HepG2 (cell line): ENCODE measurements at regions of chr22 and their contacts with region 1.

Region 1: GRCh38 chr22:21712894-21713712 is 22.5 kb downstream of the YPEL1 start:
- DNase-seq: peak; percentile 77
- ATAC-seq: peak; percentile 92
- H3K4me3 ChIP-seq: peak overlapping the region in 1 of 3 experiments; percentile 26; a peak in 1 of 6 replicates
- H3K27ac ChIP-seq: no peak overlapping the region
- H3K4me1 ChIP-seq: peaks cover 40% of the 10 kb centered on the region
- H3K27me3 ChIP-seq: peaks cover 2 to 20% of the 10 kb centered on the region in 2 experiments; a peak in 3 of 5 replicates
- CTCF ChIP-seq: peak; percentile 85
- EP300 ChIP-seq: no peak
- POLR2A ChIP-seq: no peak
- RAD21 ChIP-seq: peak; percentile 69

Region 2: DNA sequence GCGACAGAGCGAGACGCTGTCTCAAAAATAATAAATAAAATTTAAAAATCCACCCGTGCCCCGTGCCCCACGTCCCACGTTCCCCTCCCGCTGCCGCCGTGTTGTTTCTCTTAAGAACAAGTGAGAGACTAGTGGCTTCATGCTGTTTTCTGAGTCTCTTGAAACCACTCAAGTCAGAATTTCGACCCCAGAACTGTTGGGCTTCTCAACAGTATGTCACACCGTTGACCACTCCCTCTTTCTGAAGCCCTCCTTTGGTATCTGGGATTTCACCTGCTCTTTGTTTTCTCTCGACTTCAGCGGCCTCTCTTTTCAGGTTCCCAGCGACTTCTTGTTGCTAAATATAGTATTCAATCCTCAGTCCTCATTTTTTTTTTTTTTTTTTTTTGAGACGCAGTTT is 46.3 kb before region 1 on chr22:
- CTCF ChIA-PET with region 1: no interaction called
- POLR2A ChIA-PET with region 1: interaction called, 4 read pairs
- in situ Hi-C with region 1: loop called (anchors 10 kb)
- intact Hi-C with region 1: no loop called
- DNase-seq: no peak
- ATAC-seq: no peak
- H3K4me3 ChIP-seq: peak overlapping the region; percentile 70 to 92 (median 87); a peak in 5 of 6 replicates
- H3K27ac ChIP-seq: peak overlapping the region; percentile 99
- H3K4me1 ChIP-seq: peaks cover 16% of the 10 kb centered on the region
- H3K27me3 ChIP-seq: no peaks in the 10 kb centered on the region
- CTCF ChIP-seq: no peak
- EP300 ChIP-seq: no peak
- POLR2A ChIP-seq: no peak
- RAD21 ChIP-seq: no peak

Region 3: DNA sequence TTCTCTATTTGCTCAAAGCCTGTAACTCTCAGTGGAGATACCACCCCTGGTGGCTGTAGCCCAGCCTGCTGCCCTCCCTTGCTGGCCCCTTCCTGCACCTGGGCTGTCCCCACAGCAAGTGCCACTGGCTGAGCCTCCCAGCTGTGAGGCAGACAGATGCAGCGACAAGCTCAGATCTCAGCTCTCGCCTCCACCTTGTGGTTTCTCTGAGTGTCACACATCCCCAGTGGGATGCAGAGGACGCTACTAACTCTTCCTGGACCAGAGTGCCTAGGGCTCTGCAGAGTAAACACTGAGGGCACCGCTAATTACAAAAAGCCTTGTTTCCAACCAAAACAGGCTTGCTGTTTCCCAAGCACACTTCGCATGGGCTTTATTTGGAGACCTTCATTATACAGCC is 13.5 kb after region 1 on chr22:
- CTCF ChIA-PET with region 1: interaction called, 15 read pairs
- POLR2A ChIA-PET with region 1: no interaction called
- in situ Hi-C with region 1: no loop called
- intact Hi-C with region 1: no loop called
- DNase-seq: peak; percentile 57
- ATAC-seq: peak; percentile 97
- H3K4me3 ChIP-seq: no peak overlapping the region
- H3K27ac ChIP-seq: no peak overlapping the region
- H3K4me1 ChIP-seq: peaks cover 4% of the 10 kb centered on the region; the same call in 1 of the 2 replicates
- H3K27me3 ChIP-seq: peaks cover 0 to 6% of the 10 kb centered on the region in 2 experiments; a peak in 2 of 5 replicates
- CTCF ChIP-seq: peak; percentile 82
- EP300 ChIP-seq: no peak
- POLR2A ChIP-seq: no peak
- RAD21 ChIP-seq: peak; percentile 72

Region 4: DNA sequence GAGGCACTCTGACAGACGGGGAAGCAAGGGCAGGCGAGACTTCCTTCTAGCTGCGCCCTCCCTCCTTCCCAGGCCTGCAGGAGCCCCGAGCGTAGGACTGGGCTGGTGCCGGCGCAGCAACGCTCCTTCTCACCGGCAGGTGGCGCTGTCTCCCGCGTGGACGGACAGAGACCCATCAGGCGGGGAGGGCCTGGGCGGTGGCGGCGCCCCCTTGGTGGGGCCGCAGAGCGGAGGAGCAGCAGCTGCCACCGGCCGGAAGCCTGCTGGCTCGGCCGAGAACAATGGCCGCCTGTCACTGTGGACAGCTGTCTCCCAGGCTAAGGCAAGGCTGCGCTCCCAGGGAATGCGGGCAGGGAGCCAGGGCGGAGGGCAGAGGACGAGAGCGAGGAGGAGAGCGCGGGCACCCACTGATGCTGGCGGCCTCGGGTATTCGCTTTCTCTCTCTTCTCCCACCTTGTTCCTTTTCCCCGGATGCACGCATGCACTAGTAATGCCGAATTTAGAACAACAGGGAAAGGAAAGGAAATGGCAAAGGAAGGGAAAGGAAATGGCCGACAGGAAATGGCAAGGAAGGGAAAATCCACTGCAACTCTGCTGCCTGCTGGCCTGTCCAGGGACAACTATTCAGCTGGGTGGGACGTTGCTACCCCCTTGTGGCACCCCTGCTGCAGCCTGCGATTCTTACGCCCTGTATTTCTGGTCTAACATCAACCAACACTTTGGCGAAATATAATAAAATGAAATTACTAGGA is 225.1 kb after region 1 on chr22:
- CTCF ChIA-PET with region 1: interaction called, 15 read pairs
- POLR2A ChIA-PET with region 1: interaction called, 3 read pairs
- in situ Hi-C with region 1: no loop called
- intact Hi-C with region 1: loop called (anchors 1 kb)
- DNase-seq: peak; percentile 83
- ATAC-seq: peak; percentile 96
- H3K4me3 ChIP-seq: peak overlapping the region; percentile 56 to 78 (median 72)
- H3K27ac ChIP-seq: peak overlapping the region; percentile 83
- H3K4me1 ChIP-seq: peaks cover 18% of the 10 kb centered on the region
- H3K27me3 ChIP-seq: no peaks in the 10 kb centered on the region
- CTCF ChIP-seq: peak; percentile 99
- EP300 ChIP-seq: no peak
- POLR2A ChIP-seq: peak; percentile 57 to 73; a peak in 3 of 4 replicates
- RAD21 ChIP-seq: peak; percentile 85

Region 5: GRCh38 chr22:21947040-21948014 is 234.2 kb after region 1 on chr22:
- CTCF ChIA-PET with region 1: interaction called, 5 read pairs
- POLR2A ChIA-PET with region 1: no interaction called
- in situ Hi-C with region 1: loop called (anchors 5 kb)
- intact Hi-C with region 1: loop called (anchors 2 kb)
- DNase-seq: peak; percentile 27
- ATAC-seq: peak; percentile 39; the same call in 2 of the 3 replicates
- H3K4me3 ChIP-seq: no peak overlapping the region
- H3K27ac ChIP-seq: no peak overlapping the region
- H3K4me1 ChIP-seq: peaks cover 11% of the 10 kb centered on the region
- H3K27me3 ChIP-seq: no peaks in the 10 kb centered on the region; a peak in 1 of 5 replicates
- CTCF ChIP-seq: peak; percentile 22; the same call in 1 of the 2 replicates
- EP300 ChIP-seq: no peak
- POLR2A ChIP-seq: no peak
- RAD21 ChIP-seq: no peak

Region 6: DNA sequence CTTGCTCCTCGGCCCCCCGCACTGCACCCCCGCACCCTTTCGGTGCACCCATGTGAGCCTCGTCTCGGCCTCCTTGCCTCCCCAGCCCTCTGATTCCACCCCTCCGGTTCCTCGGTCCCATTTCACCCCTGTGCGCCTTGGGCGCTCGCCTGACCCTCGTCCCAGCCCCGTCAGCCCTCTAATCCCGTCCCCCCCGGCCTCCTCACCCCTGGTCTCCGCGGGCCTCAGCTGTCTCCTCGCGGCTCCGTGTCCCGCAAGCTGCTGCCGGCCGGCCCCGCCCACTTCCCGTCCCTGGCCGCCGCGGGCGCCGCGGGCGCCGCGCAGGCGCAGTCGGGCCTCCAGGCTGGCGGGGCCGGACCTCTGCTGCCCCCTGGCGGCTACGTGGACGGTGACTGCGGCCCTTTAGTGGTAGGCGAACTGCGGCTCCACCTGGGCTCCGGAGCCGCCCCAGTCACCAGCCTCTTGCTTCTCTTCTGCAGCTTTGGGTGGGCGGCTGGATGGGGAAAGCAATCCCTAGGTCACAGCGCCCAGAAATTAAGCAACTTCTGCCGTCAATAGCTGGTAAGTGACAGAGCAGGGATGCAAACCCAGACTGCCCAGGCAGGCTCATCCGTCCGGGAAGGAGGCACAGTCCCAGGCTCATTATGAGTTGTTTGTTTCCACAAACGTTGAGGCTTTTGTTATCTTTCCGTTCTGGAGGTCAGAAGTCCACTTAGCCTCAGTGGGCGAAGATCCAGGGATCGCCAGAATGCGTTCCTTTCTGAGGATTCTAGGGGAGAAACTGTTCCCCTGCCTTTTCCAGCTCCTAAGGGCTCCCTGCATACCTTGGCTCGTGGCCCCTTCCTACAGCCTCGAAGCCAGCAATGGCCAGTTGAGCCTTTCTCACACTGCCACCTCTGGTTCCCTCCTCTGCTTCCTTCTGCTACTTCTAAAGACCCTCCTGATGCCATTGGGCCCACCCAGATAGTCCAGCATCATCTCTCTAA is 239.8 kb after region 1 on chr22 and contains the start of gene PPM1F:
- CTCF ChIA-PET with region 1: interaction called, 5 read pairs
- POLR2A ChIA-PET with region 1: no interaction called
- in situ Hi-C with region 1: loop called (anchors 5 kb)
- intact Hi-C with region 1: loop called (anchors 2 kb)
- DNase-seq: peak; percentile 57
- ATAC-seq: peak; percentile 77
- H3K4me3 ChIP-seq: peak within 1 kb of the TSS; percentile 67 to 90 (median 86)
- H3K27ac ChIP-seq: no peak within 1 kb of the TSS
- H3K4me1 ChIP-seq: peaks cover 16% of the 10 kb centered on the region
- H3K27me3 ChIP-seq: no peaks in the 10 kb centered on the region; a peak in 1 of 5 replicates
- CTCF ChIP-seq: peak; percentile 85
- EP300 ChIP-seq: no peak
- POLR2A ChIP-seq: peak in 1 of 2 experiments; percentile 71; a peak in 2 of 4 replicates
- RAD21 ChIP-seq: peak; percentile 87
- total RNA-seq, gene PPM1F: 19.6 and 20.4 TPM in 2 replicates